ENCODE measurements at regions of chr1 and their contacts with region 1.

Region 1: DNA sequence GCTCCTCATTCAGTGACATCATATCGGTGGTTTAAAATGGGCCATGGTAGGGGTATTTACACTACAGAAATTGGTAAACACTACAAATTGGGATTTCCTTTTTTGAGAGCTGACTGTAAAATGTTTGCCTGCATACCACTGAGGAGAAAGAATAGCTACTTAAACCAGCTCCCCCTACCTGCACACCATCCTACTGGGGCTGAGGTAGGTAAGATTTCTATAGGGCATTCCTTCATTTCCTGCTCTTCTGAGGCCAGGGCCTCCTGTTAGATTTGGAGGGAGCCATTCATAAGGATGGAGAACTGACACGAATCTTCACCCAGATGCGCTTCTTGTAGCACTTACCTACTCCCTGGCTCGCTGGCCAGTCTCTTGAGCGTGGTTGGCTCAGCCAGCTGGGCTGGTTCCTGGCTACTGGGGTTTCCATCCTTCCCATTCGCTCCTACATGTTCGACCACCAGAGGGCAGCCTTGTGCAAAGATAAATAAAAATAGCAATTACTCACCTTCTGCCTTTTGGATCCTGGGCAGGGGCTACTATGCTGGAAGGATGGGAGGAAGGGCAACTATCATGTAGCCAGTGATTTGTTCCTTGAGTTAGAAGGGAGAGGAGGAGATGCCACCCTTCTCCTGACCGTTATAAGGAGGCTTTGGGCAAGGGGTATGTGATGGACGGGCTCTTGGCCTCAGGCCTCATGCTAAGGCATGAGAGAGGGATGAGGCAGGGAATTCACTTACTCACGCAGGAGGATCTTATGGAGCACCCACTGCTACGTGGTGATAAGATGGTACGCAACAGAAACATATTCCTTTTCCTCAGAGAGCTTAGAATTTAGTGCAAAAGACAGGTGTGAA is 10.7 kb downstream of the OPTC start:
- DNase-seq: peak; percentile 64 to 90 (median 77)
- H3K4me3 ChIP-seq: no peak overlapping the region
- H3K27ac ChIP-seq: peak overlapping the region in 1 of 59 donors; percentile 22
- H3K27me3 ChIP-seq: no peaks in the 10 kb centered on the region
- CTCF ChIP-seq: peak; percentile 76 to 97 (median 88)

Region 2: DNA sequence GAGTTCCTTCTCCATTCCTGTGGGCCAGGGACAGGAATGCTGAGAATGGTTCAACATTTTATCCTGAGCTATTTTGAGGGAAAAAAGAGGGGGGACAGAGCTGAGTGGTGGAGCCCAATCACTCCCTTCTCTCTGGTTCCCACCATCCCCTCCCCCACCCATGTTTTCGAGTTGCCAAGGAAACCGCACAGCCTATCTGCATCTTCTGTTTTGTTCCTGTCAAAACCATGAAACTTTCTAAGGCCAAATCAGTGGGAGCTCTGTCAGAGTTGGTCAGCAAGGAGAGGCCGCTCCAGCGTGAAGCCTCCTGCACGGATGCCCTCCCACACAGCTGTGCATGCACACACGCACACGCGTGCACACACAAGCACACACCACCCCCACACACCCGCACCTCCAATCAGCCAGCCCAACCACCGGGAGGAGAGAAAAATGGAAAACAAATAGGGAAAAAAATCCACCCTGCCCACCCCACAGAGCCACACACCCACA is 67.6 kb after region 1 on chr1:
- intact Hi-C with region 1: no loop called
- DNase-seq: peak in 1 of 10 donors; percentile 27
- H3K4me3 ChIP-seq: no peak overlapping the region
- H3K27ac ChIP-seq: peak overlapping the region in 15 of 59 donors; percentile 7 to 70 (median 38)
- H3K27me3 ChIP-seq: no peaks in the 10 kb centered on the region
- CTCF ChIP-seq: no peak

Region 3: GRCh38 chr1:203625628-203626019 is 121.0 kb after region 1 on chr1:
- intact Hi-C with region 1: loop called (anchors 2 to 5 kb)
- DNase-seq: peak in 3 of 10 donors; percentile 23 to 63 (median 56)
- H3K4me3 ChIP-seq: peak overlapping the region in 16 of 59 donors; percentile 6 to 90 (median 72)
- H3K27ac ChIP-seq: peak overlapping the region in 35 of 59 donors; percentile 1 to 90 (median 64)
- H3K27me3 ChIP-seq: no peaks in the 10 kb centered on the region
- CTCF ChIP-seq: peak; percentile 19 to 84 (median 69)

Region 4: GRCh38 chr1:203702130-203702577 is 197.5 kb after region 1 on chr1:
- intact Hi-C with region 1: loop called (anchors 1 to 2 kb)
- DNase-seq: peak; percentile 27 to 80 (median 58)
- H3K4me3 ChIP-seq: no peak overlapping the region
- H3K27ac ChIP-seq: peak overlapping the region in 12 of 59 donors; percentile 4 to 60 (median 30)
- H3K27me3 ChIP-seq: no peaks in the 10 kb centered on the region
- CTCF ChIP-seq: peak; percentile 78 to 98 (median 93)

Region 5: GRCh38 chr1:203769505-203770343 is 265.1 kb after region 1 on chr1:
- intact Hi-C with region 1: loop called in 1 of 2 experiments (anchors 10 kb)
- DNase-seq: peak in 7 of 10 donors; percentile 35 to 80 (median 53)
- H3K4me3 ChIP-seq: peak overlapping the region in 35 of 59 donors; percentile 13 to 55 (median 34)
- H3K27ac ChIP-seq: no peak overlapping the region
- H3K27me3 ChIP-seq: no peaks in the 10 kb centered on the region
- CTCF ChIP-seq: no peak

Region 6: GRCh38 chr1:203776636-203777035 is 272.0 kb after region 1 on chr1:
- intact Hi-C with region 1: loop called (anchors 5 to 10 kb)
- DNase-seq: peak in 3 of 10 donors; percentile 19 to 66 (median 51)
- H3K4me3 ChIP-seq: no peak overlapping the region
- H3K27ac ChIP-seq: peak overlapping the region in 39 of 59 donors; percentile 8 to 80 (median 59)
- H3K27me3 ChIP-seq: no peaks in the 10 kb centered on the region
- CTCF ChIP-seq: peak in 43 of 56 donors; percentile 17 to 67 (median 42)

Measured in dorsolateral prefrontal cortex (tissue), 120 donors.